BJ (cell line): ENCODE measurements at regions of chr15 and their contacts with region 1.

Region 1: GRCh38 chr15:62241135-62241770 is 76.2 kb upstream of the C2CD4B start:
- DNase-seq: no peak
- H3K4me3 ChIP-seq: no peak overlapping the region
- H3K27me3 ChIP-seq: 0 out of 2 replicates have a peak, but pooled peaks cover 3% of the 10 kb centered on the region
- CTCF ChIP-seq: peak; percentile 44

Region 2: DNA sequence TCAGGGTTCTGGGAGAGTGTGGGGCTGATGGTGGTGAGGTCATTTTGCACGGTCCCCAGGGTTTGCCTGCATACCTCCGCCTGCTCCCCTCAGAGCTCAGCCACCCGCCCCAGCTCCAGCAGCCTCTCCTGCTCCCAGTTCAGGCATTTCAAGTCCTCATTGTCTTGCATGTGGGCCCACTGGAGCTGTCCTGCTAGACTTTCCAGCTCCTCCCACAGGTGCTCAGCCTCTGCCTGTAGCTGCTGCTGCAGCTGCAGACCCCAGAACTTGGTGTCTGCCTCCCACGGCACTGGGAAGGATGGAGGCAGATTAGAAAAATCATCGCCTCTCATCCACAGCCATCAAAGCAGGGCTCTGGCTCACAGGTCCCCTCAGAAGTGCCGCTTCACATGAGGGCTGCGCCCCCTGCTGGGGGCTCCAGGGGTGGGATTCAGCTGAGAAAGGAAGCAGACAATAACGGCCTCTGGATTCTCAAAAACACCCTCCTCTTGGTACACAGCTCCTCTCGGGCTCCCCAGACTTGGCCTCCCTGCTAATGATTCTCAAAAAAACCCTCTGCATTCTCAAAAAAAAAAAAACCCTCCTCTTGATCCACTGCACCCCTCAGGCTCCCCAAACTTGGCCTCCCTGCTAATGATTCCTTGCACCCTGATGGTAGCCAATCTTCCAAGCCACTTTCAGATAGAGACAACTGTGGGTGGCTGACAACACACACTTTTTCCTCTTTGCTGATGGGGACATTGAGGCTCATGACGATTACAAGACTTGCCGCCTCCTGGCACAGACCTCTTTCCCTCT is 13.1 kb after region 1 on chr15:
- CTCF ChIA-PET with region 1: interaction called, 15 read pairs
- POLR2A ChIA-PET with region 1: no interaction called
- DNase-seq: no peak
- H3K4me3 ChIP-seq: no peak overlapping the region
- H3K27me3 ChIP-seq: peaks cover 7% of the 10 kb centered on the region
- CTCF ChIP-seq: peak; percentile 77

Region 3: DNA sequence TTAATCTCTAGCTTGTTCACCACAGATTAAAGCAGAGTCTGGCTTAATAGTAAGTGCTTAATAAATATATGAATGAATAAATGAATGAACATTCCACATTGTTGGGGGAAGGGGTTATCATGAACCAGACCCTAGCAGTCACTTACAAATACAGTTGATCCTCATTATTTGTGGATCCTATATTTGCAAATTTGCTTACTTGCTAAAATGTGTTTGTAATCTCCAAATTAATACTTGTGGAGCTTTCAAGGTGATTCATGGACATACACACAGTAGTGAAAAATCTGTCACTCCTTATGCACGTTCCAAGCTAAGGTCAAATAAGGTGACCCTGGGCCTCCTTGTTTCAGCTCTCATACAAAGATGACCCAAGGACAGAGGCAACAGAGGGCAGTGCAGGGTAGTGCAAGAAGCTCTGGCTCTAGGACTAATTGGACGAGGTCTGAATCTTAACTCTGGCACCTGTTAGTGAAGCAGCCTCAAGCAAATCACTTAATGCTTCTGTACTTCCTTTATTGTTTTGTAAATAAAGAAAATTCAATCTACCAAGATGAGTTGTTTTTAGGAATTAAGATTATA is 36.7 kb after region 1 on chr15:
- CTCF ChIA-PET with region 1: no interaction called
- POLR2A ChIA-PET with region 1: no interaction called
- DNase-seq: no peak
- H3K4me3 ChIP-seq: no peak overlapping the region
- H3K27me3 ChIP-seq: 0 out of 2 replicates have a peak, but pooled peaks cover 1% of the 10 kb centered on the region
- CTCF ChIP-seq: no peak